ENCODE measurements at regions of chr5 and their contacts with region 1.

Region 1: GRCh38 chr5:16934123-16934522 is 2.0 kb downstream of the MYO10 start:
- DNase-seq: peak; percentile 85
- H3K4me3 Mint-ChIP-seq: peak overlapping the region; percentile 97
- H3K27ac Mint-ChIP-seq: peak overlapping the region; percentile 83
- H3K4me1 Mint-ChIP-seq: peaks cover 36% of the 10 kb centered on the region
- H3K27me3 Mint-ChIP-seq: no peaks in the 10 kb centered on the region
- CTCF ChIP-seq: peak; percentile 86

Region 2: DNA sequence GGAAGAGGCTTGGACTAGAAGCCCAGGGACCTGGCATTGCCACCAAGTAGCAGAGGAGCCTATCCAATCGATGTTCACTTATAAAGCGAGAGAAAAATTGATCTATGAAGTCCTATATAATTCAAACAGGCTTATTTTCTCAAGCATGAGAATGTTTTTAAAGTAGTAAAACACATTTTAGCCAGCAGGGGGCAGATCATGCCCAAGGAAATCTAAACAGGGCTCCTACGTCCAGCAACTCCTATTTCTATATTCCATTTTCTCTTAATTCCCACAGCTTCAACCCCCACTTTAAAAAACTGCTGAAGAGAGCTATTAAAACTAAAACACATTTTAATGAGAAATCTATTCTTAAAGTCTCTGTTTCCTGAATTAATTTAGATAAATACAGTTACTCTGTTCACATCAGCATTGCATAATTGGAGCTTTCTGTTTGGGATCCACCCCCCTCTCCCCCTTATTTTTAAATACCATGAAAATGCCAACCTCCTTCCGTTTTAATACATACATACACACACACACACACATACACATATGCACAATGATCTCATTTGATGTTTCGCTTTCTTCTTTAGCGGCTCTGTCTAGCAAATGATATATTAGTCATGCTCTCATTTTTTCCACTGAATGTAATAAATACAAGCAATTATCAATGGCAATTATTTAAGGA is 143.0 kb before region 1 on chr5:
- CTCF ChIA-PET with region 1: interaction called, 4 read pairs
- intact Hi-C with region 1: loop called (anchors 2 kb)
- DNase-seq: peak; percentile 50
- H3K4me3 Mint-ChIP-seq: no peak overlapping the region
- H3K27ac Mint-ChIP-seq: no peak overlapping the region
- H3K4me1 Mint-ChIP-seq: peaks cover 31% of the 10 kb centered on the region
- H3K27me3 Mint-ChIP-seq: no peaks in the 10 kb centered on the region
- CTCF ChIP-seq: peak; percentile 64

Region 3: GRCh38 chr5:16894236-16895057 is 39.7 kb before region 1 on chr5:
- CTCF ChIA-PET with region 1: interaction called, 6 read pairs
- intact Hi-C with region 1: loop called (anchors 2 kb)
- DNase-seq: peak; percentile 75
- H3K4me3 Mint-ChIP-seq: peak overlapping the region; percentile 63
- H3K27ac Mint-ChIP-seq: peak overlapping the region; percentile 95
- H3K4me1 Mint-ChIP-seq: peaks cover 79% of the 10 kb centered on the region
- H3K27me3 Mint-ChIP-seq: no peaks in the 10 kb centered on the region
- CTCF ChIP-seq: no peak

Region 4: DNA sequence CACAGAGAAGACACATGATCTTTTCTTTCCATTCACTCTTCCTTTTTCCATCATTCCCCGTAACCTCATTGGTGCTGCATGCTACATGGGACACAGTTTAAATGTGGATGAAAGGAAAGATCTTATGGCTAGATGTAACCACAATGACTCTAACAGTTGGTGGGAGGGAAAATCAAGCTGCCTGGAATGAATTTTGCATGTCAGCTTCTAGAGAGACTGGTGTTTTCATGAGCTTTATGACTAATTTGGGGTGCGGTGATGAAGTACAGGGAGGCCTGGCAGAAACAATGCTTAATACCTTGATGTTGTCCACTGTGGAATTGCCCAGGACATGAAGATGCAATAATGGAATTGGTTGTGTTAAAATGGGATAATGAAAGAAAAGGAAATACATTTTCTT is 57.9 kb after region 1 on chr5:
- CTCF ChIA-PET with region 1: no interaction called
- intact Hi-C with region 1: loop called (anchors 5 kb)
- DNase-seq: peak; percentile 17
- H3K4me3 Mint-ChIP-seq: no peak overlapping the region
- H3K27ac Mint-ChIP-seq: peak overlapping the region; percentile 80
- H3K4me1 Mint-ChIP-seq: peaks cover 37% of the 10 kb centered on the region
- H3K27me3 Mint-ChIP-seq: no peaks in the 10 kb centered on the region
- CTCF ChIP-seq: no peak

Region 5: DNA sequence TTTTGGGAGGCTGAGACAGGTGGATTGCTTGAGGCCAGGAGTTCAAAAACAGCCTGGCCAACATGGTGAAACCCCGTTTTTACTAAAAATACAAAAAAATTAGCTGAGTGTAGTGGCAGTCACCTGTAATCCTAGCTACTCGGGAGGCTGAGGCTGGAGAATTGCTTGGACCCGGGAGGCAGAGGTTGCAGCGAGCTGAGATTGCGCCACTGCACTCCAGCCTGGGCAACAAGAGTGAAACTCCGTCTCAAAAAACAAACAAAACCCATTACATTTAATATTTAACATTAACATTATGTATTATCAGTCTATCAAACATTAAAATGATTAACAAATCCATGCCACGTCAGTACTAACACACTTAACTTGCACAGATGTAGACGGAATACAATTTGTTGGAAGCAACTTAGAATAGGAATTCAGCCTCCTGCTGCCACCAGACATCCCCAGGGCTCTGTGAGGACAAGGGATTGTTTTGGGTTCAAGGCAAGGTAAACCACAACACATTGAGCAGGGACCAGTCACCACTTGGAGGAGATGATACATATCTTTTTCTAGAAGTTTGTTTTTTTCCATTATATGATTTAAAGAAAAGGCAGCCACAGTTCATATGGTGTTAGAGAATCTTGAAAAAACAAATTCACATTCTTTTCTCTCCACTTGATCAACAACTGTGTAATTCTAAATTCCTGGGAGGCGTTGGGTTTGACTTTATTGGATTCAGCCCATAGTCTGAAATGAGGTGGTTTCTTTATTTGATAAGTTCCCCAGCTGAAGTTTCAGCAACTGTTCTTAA is 179.2 kb after region 1 on chr5:
- CTCF ChIA-PET with region 1: interaction called, 5 read pairs
- intact Hi-C with region 1: loop called (anchors 5 kb)
- DNase-seq: peak; percentile 49
- H3K4me3 Mint-ChIP-seq: peak overlapping the region; percentile 59
- H3K27ac Mint-ChIP-seq: peak overlapping the region; percentile 96
- H3K4me1 Mint-ChIP-seq: peaks cover 54% of the 10 kb centered on the region
- H3K27me3 Mint-ChIP-seq: no peaks in the 10 kb centered on the region
- CTCF ChIP-seq: no peak

Region 6: DNA sequence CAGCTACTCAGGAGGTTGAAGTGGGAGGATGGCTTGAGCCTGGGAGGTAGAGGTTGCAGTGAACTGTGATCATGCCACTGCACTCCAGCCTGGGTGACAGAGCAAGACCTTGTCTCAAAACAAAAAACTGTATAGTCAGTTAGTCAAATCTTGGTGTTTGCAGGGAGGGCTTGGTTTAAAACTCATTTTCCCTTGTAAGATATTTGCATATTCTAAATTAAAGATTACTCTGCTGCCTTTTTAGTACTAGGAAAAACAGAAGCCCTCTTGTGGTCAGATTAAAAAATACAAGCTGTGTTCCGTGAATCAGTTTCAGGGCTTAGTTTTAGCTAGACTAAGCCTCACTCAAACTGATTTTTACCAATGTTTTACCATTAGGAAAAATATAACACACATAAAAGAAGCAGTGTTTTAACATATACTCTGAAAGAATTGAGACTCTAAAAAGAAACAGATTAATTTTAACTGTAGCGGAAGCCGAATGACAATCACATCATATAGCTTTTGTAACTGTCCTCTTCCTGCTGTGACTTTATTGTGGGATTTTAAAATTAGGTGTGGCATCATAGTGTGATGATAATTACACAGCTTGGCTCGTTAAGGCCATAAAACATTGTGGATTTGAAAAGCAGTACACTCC is 198.4 kb after region 1 on chr5:
- CTCF ChIA-PET with region 1: interaction called, 18 read pairs
- intact Hi-C with region 1: loop called (anchors 1 kb)
- DNase-seq: no peak
- H3K4me3 Mint-ChIP-seq: no peak overlapping the region
- H3K27ac Mint-ChIP-seq: no peak overlapping the region
- H3K4me1 Mint-ChIP-seq: peaks cover 27% of the 10 kb centered on the region
- H3K27me3 Mint-ChIP-seq: no peaks in the 10 kb centered on the region
- CTCF ChIP-seq: peak; percentile 44

Region 7: DNA sequence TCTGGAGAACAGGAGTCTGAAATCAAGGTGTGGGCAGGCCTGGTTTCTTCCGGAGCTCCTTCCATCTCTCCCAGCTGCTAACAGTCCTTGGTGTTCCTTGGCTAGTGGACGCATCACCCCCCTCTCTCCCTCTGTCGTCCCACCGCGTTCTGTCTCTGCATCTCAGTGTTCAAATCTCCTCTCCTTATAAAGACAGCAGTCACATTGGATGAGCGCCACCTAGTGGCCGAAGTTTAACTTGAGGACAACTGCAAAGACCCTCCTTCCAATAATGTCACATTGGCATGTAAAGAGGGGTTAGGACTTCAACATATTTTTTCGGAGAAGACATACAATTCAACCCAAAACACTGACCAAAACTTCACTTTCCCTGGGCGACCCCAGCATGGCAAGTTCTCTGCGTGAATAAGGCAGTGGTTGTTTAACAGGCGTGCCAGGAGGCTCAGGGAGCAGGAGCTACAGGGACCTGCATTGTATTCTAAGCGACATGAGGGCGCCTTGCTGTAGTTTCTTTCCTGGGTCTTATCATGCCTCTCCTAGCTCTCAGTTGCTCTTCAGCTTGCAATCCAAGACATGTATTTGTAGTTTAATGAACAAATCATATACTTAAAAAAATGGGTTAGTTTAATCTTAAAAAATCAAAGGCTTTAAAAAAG is 255.4 kb after region 1 on chr5:
- CTCF ChIA-PET with region 1: interaction called, 23 read pairs
- intact Hi-C with region 1: loop called (anchors 1 kb)
- DNase-seq: peak; percentile 80
- H3K4me3 Mint-ChIP-seq: peak overlapping the region; percentile 15
- H3K27ac Mint-ChIP-seq: peak overlapping the region; percentile 64
- H3K4me1 Mint-ChIP-seq: peaks cover 41% of the 10 kb centered on the region
- H3K27me3 Mint-ChIP-seq: no peaks in the 10 kb centered on the region
- CTCF ChIP-seq: peak; percentile 88